ENCODE measurements at regions of chr15 and their contacts with region 1.

Region 1: GRCh38 chr15:85582131-85583079 is 202.0 kb downstream of the AKAP13 start:
- DNase-seq: peak; percentile 67
- H3K4me3 Mint-ChIP-seq: peak overlapping the region; percentile 84
- H3K27ac Mint-ChIP-seq: peak overlapping the region; percentile 95
- H3K4me1 Mint-ChIP-seq: peaks cover 84% of the 10 kb centered on the region
- H3K27me3 Mint-ChIP-seq: no peaks in the 10 kb centered on the region

Region 2: DNA sequence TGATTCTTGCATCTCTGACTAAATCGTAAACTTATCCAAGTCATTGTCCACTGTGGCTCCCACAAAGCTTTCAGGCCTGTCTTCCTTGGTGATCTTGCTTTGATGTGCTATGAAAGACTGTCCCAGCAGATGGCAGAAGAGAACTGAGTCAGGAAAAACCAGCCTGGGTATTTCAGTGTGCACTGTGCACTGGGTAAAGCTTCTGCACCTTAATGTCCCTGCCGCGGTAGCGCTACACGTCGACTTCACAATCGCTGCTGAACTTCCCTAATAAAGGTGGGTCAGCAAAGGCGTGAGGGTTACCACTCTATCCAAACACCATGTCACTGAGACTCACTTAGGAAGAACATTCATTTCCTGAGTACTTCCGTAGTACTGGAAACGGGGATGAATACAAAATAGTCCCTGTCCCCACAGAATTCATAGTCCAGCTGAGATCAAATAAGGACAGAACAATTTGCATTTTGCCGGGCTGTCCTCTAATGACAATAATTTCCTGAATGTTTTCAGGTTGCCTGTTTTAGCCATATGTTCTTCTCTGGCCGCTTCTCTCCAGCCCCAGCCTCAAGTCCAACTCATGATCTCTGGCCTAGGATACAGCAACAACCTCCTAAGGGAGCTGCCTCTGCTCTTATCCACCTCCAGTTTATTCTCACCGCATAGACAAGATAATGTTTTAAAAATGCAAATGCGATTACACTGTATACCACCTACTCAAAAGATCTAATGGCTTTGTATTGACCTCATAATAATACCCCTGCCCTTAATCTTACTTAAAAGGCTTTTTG is 285.6 kb before region 1 on chr15:
- intact Hi-C with region 1: loop called (anchors 10 kb)
- DNase-seq: peak; percentile 68
- H3K4me3 Mint-ChIP-seq: peak overlapping the region; percentile 34
- H3K27ac Mint-ChIP-seq: no peak overlapping the region
- H3K4me1 Mint-ChIP-seq: peaks cover 18% of the 10 kb centered on the region
- H3K27me3 Mint-ChIP-seq: peaks cover 5% of the 10 kb centered on the region

Region 3: GRCh38 chr15:85527895-85528294 is 54.5 kb before region 1 on chr15:
- intact Hi-C with region 1: no loop called
- DNase-seq: no peak
- H3K4me3 Mint-ChIP-seq: no peak overlapping the region
- H3K27ac Mint-ChIP-seq: no peak overlapping the region
- H3K4me1 Mint-ChIP-seq: peaks cover 30% of the 10 kb centered on the region
- H3K27me3 Mint-ChIP-seq: no peaks in the 10 kb centered on the region

Region 4: GRCh38 chr15:85555875-85556617 is 26.4 kb before region 1 on chr15:
- intact Hi-C with region 1: loop called (anchors 1 kb)
- DNase-seq: no peak
- H3K4me3 Mint-ChIP-seq: peak overlapping the region; percentile 8
- H3K27ac Mint-ChIP-seq: peak overlapping the region; percentile 29
- H3K4me1 Mint-ChIP-seq: peaks cover 58% of the 10 kb centered on the region
- H3K27me3 Mint-ChIP-seq: no peaks in the 10 kb centered on the region

Region 5: DNA sequence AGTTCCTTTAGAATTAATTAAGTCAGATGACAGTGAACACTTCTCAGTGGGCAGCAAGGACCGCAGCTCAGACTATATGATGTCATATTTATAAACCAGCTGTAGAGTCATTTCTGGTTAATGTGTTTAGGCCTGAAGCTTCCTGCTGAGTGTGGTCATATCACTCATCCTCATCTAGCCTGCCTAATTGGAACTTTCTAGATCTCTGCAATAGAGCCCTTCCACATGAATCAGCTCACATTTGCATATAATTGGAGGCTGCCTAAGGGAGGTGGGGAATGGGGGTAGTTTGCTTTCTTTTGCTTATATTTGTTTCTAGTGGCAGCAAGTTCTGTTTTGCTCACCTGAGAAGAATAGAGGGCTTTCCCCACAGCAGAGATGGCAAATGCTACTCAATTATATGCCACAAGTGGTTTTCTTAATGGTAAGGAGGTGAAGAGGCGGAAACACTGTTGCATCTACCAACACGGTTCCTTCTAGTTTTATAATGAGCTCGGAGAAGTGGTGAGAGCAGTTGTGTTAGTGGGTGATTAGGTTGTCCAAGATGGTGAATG is 64.2 kb after region 1 on chr15:
- intact Hi-C with region 1: loop called (anchors 1 kb)
- DNase-seq: peak; percentile 14
- H3K4me3 Mint-ChIP-seq: peak overlapping the region; percentile 30
- H3K27ac Mint-ChIP-seq: peak overlapping the region; percentile 92
- H3K4me1 Mint-ChIP-seq: peaks cover 44% of the 10 kb centered on the region
- H3K27me3 Mint-ChIP-seq: no peaks in the 10 kb centered on the region

Region 6: DNA sequence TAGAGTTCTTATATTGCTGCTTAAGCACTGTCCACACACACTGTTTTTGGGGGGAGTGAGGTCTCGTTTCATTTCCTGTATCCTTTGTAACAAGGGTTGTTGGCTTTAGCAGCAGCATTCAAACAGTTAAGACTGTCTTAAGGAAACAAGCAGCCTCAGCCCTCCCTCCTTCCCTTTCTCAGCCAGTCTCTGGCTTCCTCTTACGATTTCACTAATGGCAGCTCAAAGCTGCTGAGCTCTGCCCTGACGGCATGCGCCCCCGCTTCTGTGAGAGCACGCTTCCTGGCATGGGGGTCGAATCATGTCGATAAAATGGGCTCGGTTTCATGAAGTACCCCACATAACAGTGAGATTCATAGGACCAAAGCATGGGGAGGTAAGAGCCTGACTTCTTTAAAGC is 107.3 kb after region 1 on chr15:
- intact Hi-C with region 1: loop called (anchors 1 kb)
- DNase-seq: peak; percentile 56
- H3K4me3 Mint-ChIP-seq: peak overlapping the region; percentile 96
- H3K27ac Mint-ChIP-seq: peak overlapping the region; percentile 100
- H3K4me1 Mint-ChIP-seq: peaks cover 73% of the 10 kb centered on the region
- H3K27me3 Mint-ChIP-seq: no peaks in the 10 kb centered on the region

Measured in activated T-helper 1 cell treated with anti-CD3 and anti-CD28 coated beads, Interleukin-12 subunit alpha, Interleukin-12 subunit beta, Interleukin-2, Interleukin-4 antibody, amounts not matched to agents 30 ng/mL and 10 ng/mL and 1 ng/mL, durations not matched to agents 14 hours and 24 hours and 36 hours (primary cell).